Panc1 (cell line): ENCODE measurements at regions of chr7 and their contacts with region 1.

Region 1: DNA sequence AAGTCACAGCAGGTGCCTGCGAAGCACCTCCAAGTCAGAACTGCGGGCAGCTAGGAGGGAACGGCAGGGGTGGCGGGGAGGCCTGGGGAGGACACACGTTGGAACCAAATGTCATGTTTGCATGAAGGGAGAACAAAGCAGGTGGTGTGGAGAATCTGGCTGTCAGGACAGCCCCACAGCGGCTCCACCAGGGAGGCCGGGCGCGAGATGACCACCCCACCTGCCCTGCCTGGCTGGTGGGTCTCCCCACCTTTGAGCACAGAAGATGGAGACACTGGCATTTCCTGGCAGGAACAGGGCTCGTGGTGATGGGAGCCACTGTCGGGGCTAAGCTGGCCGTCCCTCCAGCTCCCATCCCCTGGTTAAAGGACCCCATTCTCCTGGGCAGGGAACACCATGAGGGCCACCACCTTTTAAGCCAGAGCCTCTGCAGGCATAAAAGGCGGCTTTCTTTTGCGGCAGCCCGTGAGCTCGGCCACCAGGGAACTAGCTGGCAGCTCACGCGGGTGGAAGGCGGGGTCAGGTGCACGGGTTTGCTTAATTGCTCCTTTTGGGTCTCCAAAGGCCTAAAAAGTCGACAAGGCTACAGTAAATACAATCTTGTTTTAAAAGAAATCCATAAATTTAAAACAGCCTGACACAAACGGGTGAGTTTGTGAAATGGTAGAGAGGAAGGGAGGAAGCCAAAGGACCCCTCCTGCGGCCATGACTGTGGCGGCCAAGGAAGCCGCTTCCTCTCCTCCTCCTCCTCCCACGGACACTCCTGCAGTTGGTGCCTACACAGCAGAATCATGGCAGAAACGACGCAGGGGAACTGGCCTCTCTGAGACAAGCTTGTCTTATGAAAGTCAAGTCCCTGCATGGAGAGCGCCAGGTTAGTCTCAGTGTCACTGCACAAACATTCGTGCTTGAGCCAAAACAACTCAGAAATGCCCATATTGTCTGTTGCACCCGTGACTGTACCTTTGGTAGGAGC is 213.8 kb downstream of the DNAJB6 start:
- DNase-seq: no peak
- ATAC-seq: 0 out of 2 replicates have a peak, but pooled peaks have one; percentile 40
- H3K4me3 ChIP-seq: no peak overlapping the region
- H3K27ac ChIP-seq: no peak overlapping the region
- H3K4me1 ChIP-seq: no peaks in the 10 kb centered on the region
- H3K27me3 ChIP-seq: no peaks in the 10 kb centered on the region
- CTCF ChIP-seq: no peak

Region 2: DNA sequence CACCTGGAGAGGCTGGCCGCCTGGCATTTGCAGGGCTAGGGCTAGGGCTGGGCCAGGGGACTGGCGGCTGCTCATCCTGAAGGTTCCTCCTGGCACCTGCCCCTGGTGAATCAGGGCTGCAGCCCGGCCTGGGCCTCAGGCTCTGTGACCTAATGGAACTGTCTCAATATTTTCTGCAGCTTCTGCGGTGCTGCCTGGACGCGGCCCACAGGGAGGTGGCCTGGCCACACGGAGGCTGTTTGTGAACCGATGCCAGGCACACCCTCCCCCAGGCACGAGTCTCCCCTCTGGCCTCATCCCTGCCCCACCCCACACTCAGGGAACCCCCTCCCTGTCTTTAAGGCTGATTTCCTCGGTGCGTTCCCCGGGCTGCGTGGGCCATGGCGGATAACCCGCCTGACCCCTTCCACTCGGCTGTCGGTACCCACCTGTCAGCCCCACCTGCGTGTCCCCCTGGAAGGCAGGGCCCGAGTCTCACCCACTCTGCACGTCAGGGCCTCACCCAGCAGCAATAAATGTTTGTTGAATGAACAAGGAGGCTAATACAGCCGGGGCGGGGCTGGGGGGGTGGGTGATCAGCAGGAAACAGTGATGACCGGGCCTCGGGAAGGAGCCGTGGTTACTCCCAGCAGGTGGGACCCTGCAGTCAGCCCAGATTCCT is 268.3 kb before region 1 on chr7:
- CTCF ChIA-PET with region 1: no interaction called
- POLR2A ChIA-PET with region 1: no interaction called
- in situ Hi-C with region 1: no loop called
- intact Hi-C with region 1: no loop called
- DNase-seq: no peak
- ATAC-seq: peak; percentile 46
- H3K4me3 ChIP-seq: no peak overlapping the region
- H3K27ac ChIP-seq: peak overlapping the region; percentile 83
- H3K4me1 ChIP-seq: peaks cover 37% of the 10 kb centered on the region
- H3K27me3 ChIP-seq: no peaks in the 10 kb centered on the region
- CTCF ChIP-seq: no peak

Region 3: DNA sequence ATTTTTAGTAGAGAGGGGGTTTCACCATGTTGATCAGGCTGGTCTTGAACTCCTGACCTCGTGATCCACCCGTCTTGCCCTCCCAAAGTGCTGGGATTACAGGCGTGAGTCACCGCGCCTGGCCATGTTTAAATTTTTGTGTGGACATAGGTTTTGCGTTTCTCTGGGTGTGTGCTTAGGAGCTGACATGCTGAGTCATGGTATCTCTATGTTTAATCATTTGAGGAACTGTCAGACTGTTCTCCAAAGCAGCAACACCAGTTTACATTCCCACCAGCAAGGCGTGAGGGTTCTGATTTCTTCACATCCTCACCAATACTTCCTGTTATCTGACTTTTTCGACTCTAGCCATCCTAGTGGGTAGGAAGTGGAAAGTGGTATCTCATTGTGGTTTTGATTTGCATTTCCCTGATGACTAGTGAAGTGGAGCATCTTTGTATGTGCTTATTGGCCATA is 60.1 kb before region 1 on chr7:
- CTCF ChIA-PET with region 1: no interaction called
- POLR2A ChIA-PET with region 1: no interaction called
- in situ Hi-C with region 1: loop called (anchors 5 kb)
- intact Hi-C with region 1: no loop called
- DNase-seq: peak; percentile 33
- ATAC-seq: peak; percentile 43; the same call in 1 of the 2 replicates
- H3K4me3 ChIP-seq: no peak overlapping the region
- H3K27ac ChIP-seq: no peak overlapping the region
- H3K4me1 ChIP-seq: no peaks in the 10 kb centered on the region
- H3K27me3 ChIP-seq: peaks cover 5% of the 10 kb centered on the region; the same call in 1 of the 2 replicates
- CTCF ChIP-seq: no peak